MCF 10A (cell line): ENCODE measurements at regions of chr21 and their contacts with region 1.

Region 1: GRCh38 chr21:41630249-41630648 is 122.3 kb upstream of the TMPRSS2 start:
- DNase-seq: peak; percentile 100
- H3K4me3 Mint-ChIP-seq: peak overlapping the region; percentile 12
- H3K27ac Mint-ChIP-seq: peak overlapping the region; percentile 50
- H3K4me1 Mint-ChIP-seq: peaks cover 31% of the 10 kb centered on the region
- H3K27me3 Mint-ChIP-seq: no peaks in the 10 kb centered on the region
- CTCF ChIP-seq: no peak

Region 2: DNA sequence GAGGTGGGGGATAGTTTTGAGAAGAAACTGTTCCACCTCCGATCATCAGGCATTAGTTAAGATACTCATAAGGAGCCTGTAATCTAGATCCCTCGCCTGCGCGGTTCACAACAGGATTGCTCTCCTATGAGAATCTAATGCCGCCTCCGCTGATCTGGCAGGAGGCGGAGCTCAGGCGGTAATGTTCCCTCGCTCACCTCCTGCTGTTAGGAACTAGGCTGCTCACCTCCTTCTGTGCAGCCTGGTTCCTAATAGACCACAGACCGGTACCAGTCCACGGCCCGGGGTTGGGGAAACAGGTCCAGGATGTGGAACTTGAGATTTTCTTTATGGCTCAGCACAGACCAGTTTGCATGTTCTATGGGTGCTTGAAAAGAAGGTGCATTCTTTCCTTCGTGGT is 340.8 kb before region 1 on chr21:
- CTCF ChIA-PET with region 1: no interaction called
- POLR2A ChIA-PET with region 1: no interaction called
- intact Hi-C with region 1: no loop called
- DNase-seq: no peak
- H3K4me3 Mint-ChIP-seq: no peak overlapping the region
- H3K27ac Mint-ChIP-seq: no peak overlapping the region
- H3K4me1 Mint-ChIP-seq: no peaks in the 10 kb centered on the region
- H3K27me3 Mint-ChIP-seq: peaks cover 20% of the 10 kb centered on the region
- CTCF ChIP-seq: no peak

Region 3: DNA sequence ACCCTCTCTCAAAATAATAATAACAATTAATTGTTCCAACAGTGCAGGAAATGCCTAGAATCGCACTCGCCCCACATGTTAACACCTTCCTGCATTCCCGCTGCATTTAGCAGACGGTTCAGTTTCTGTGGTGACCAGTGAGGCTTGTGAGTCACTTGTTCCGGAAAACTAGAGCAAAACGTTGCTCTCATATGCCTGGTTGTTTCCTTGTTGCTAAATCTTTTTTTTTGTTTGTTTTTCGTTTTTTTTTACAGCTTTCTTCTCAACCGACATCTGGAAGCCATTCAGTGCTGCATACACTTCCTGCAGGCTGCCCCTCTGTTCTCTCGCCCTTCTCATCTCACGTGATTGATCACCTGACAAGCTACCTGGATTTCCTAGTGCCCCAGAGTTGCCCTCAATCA is 65.4 kb before region 1 on chr21:
- CTCF ChIA-PET with region 1: no interaction called
- POLR2A ChIA-PET with region 1: no interaction called
- intact Hi-C with region 1: no loop called
- DNase-seq: peak; percentile 67
- H3K4me3 Mint-ChIP-seq: no peak overlapping the region
- H3K27ac Mint-ChIP-seq: no peak overlapping the region
- H3K4me1 Mint-ChIP-seq: peaks cover 6% of the 10 kb centered on the region
- H3K27me3 Mint-ChIP-seq: peaks cover 38% of the 10 kb centered on the region
- CTCF ChIP-seq: no peak

Region 4: GRCh38 chr21:41601573-41602368 is 28.5 kb before region 1 on chr21:
- CTCF ChIA-PET with region 1: no interaction called
- POLR2A ChIA-PET with region 1: no interaction called
- intact Hi-C with region 1: no loop called
- DNase-seq: peak; percentile 37
- H3K4me3 Mint-ChIP-seq: no peak overlapping the region
- H3K27ac Mint-ChIP-seq: peak overlapping the region; percentile 61
- H3K4me1 Mint-ChIP-seq: peaks cover 6% of the 10 kb centered on the region
- H3K27me3 Mint-ChIP-seq: peaks cover 12% of the 10 kb centered on the region
- CTCF ChIP-seq: no peak

Region 5: DNA sequence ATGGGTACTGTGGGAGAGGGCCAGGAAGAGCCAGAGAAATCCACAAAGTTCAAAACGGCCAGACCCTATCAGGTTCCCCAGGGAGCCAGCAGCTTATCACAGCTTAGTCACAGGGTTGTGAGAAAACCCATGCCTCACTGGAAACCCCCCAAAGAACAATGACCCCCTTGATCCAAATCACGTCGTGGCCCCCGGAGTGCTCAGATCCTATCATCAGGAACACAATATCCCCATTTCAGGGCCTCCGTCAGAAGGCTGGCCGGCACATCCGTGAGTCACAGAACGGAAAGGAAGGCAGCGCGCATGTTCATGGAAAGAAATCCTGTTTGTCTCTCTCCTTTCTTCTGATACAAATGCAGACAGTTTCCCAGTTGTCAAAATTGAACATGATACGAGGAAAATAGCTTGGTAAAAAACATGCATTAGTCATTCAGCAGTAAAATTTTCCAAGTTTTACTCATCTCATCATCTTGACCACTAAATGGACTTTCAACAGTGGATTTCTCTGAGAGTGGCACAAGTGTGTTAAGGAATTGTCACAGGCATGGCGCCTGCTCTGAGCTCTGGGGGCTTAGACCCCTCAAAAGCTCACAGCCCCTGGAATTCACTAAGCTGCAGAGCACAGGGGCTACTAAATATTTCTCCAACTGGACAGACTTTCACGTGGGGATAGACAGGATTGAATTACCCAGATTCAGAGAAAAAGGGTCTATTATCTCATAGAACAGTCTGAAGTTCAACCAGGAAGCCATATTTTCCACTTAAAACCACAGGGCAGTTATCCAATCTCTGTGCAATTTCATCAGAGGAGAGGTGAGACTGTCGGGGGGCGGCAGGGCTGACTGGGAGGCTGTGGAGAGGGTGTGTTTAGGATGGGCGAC is 11.8 kb after region 1 on chr21:
- CTCF ChIA-PET with region 1: interaction called, 3 read pairs
- POLR2A ChIA-PET with region 1: interaction called, 20 read pairs
- intact Hi-C with region 1: no loop called
- DNase-seq: peak; percentile 80
- H3K4me3 Mint-ChIP-seq: no peak overlapping the region
- H3K27ac Mint-ChIP-seq: peak overlapping the region; percentile 93
- H3K4me1 Mint-ChIP-seq: peaks cover 50% of the 10 kb centered on the region
- H3K27me3 Mint-ChIP-seq: no peaks in the 10 kb centered on the region
- CTCF ChIP-seq: no peak

Region 6: GRCh38 chr21:41653954-41654491 is 23.8 kb after region 1 on chr21:
- CTCF ChIA-PET with region 1: interaction called, 8 read pairs
- POLR2A ChIA-PET with region 1: interaction called, 30 read pairs
- intact Hi-C with region 1: no loop called
- DNase-seq: peak; percentile 74
- H3K4me3 Mint-ChIP-seq: peak overlapping the region; percentile 39
- H3K27ac Mint-ChIP-seq: peak overlapping the region; percentile 64
- H3K4me1 Mint-ChIP-seq: peaks cover 37% of the 10 kb centered on the region
- H3K27me3 Mint-ChIP-seq: no peaks in the 10 kb centered on the region
- CTCF ChIP-seq: no peak

Region 7: DNA sequence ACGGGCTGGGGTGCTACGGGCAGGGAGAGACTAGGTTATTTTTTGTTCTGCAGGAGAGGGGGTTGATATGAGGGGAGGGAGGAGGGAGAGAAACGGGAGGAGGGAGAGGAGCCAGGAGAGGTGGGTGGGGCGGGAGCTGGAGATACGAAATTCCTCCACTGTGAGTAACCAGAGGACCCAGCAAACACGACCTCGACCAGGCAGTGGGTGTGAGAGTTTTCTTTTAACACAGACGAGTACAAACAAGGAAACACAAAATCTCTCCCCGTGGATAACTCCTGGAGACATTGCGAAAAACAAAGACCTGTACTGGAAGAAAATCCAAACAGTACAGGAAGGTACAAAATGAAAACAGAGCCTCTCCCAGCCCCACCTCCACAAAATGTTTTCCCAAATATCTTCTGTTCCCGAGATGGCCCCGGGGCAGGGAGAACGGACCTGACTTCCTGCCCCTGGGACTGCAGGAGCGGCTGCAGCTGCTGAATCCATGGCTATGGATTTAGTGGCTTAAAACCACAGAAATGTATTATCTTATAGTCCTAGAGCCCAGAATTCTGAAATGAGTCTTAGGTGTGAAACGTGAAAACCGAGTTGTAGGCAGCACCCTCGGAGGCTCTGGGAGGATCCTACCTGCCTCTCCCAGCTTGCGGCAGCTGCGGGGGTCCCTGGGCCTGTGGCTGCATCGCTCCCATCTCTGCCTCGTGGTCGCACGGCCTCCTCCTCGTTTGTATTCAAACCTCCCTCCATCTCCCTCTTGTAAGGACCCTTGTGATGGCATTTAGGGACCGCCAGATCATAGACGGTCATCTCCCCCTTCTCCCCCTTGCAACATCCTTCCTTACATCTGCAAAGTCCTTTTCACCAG is 54.4 kb after region 1 on chr21:
- CTCF ChIA-PET with region 1: interaction called, 16 read pairs
- POLR2A ChIA-PET with region 1: interaction called, 36 read pairs
- intact Hi-C with region 1: loop called (anchors 5 kb)
- DNase-seq: peak; percentile 72
- H3K4me3 Mint-ChIP-seq: peak overlapping the region; percentile 57
- H3K27ac Mint-ChIP-seq: peak overlapping the region; percentile 86
- H3K4me1 Mint-ChIP-seq: peaks cover 44% of the 10 kb centered on the region
- H3K27me3 Mint-ChIP-seq: no peaks in the 10 kb centered on the region
- CTCF ChIP-seq: no peak

Region 8: GRCh38 chr21:41726945-41727783 is 96.9 kb after region 1 on chr21:
- CTCF ChIA-PET with region 1: interaction called, 7 read pairs
- POLR2A ChIA-PET with region 1: interaction called, 3 read pairs
- intact Hi-C with region 1: loop called (anchors 1 kb)
- DNase-seq: peak; percentile 92
- H3K4me3 Mint-ChIP-seq: peak overlapping the region; percentile 55
- H3K27ac Mint-ChIP-seq: peak overlapping the region; percentile 84
- H3K4me1 Mint-ChIP-seq: peaks cover 25% of the 10 kb centered on the region
- H3K27me3 Mint-ChIP-seq: no peaks in the 10 kb centered on the region
- CTCF ChIP-seq: no peak

Region 9: DNA sequence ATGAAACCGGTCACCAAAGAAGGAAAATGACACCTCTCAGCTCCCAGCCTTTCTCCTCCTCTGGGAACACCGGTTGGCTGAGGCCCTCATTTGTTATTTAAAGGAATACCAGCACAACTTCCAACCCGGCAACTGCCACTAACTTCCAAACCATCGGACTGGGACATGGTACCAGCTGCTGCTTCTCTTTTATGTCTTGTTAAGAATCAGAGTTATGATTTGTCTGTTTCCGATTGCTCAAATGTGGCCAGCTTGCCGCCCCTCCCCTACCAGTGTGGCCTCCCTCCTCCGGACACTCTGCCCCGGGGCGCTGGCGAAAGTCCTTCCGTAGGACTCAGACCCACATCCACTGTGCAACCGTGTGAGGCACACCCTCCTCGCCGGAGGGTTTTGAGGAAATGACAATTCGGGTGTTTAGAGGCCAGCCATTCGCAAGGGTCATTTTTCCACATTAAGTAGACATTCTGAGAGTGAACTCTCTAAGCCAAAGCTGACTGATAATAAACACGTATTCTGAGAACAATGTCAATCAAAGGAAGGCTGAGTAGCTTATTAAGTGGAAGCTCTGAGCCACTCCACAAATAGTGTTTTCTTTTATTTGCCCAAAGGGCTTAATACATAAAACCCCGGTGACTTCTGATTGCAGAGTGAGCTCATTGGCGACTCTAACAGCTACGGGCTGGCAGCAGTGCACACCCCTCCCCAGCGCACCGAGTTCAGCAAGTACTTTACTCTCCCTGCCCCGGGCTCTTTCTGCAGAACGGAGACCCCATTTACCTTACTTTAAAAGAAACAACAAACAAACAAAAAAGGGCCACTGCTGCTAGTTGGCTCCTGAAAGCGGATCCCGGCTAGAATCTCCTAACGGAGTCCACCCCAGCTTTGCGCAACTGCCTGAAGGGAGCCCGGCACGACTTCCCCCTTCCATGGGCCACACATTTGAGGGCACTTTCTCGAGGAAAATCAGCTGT is 131.2 kb after region 1 on chr21:
- CTCF ChIA-PET with region 1: interaction called, 6 read pairs
- POLR2A ChIA-PET with region 1: interaction called, 145 read pairs
- intact Hi-C with region 1: loop called (anchors 1 kb)
- DNase-seq: peak; percentile 86
- H3K4me3 Mint-ChIP-seq: peak overlapping the region; percentile 87
- H3K27ac Mint-ChIP-seq: peak overlapping the region; percentile 62
- H3K4me1 Mint-ChIP-seq: peaks cover 53% of the 10 kb centered on the region
- H3K27me3 Mint-ChIP-seq: no peaks in the 10 kb centered on the region
- CTCF ChIP-seq: no peak

Region 10: DNA sequence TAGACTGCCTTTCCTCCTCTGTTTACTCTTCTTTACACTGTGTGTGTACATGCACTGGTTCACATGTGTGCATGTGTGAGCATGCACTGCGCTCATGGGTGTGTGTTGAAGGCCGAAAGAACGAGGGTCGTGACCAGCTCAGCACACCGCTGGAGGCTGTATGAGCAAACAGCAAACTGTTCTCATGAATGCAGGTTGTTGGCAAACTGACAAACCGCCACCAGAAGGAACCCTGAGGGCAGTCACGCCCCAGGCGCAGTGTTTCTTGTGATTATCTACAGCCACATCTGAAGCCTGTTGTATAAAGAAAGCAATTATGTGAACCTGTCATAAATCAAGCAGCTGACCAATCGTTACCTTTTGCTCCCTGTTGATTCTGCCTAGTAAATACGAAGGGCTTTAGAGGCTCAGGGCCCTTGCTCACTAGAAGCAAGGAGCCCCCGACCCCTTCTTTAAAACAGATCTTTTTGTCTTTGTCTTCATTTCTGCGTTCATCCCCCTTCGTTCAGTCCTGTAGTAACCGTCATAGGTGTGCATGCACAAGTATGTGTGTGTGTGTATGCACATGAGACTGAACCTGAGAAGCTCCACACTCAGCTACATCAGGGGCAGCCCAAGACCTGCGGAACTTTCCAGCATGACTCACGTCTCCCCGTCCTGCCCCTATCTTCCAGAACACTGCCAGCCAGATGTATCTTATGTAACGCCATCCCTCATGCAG is 153.4 kb after region 1 on chr21:
- CTCF ChIA-PET with region 1: interaction called, 9 read pairs
- POLR2A ChIA-PET with region 1: interaction called, 18 read pairs
- intact Hi-C with region 1: no loop called
- DNase-seq: peak; percentile 93
- H3K4me3 Mint-ChIP-seq: peak overlapping the region; percentile 7
- H3K27ac Mint-ChIP-seq: no peak overlapping the region
- H3K4me1 Mint-ChIP-seq: peaks cover 29% of the 10 kb centered on the region
- H3K27me3 Mint-ChIP-seq: no peaks in the 10 kb centered on the region
- CTCF ChIP-seq: no peak